ENCODE measurements at regions of chr19 and their contacts with region 1.

Region 1: GRCh38 chr19:7829561-7830271 is at the start of gene EVI5L:
- DNase-seq: peak; percentile 99
- H3K4me3 ChIP-seq: peak within 1 kb of the TSS; percentile 69 to 98
- H3K27ac ChIP-seq: no peak within 1 kb of the TSS
- H3K4me1 ChIP-seq: peaks cover 3 to 9% of the 10 kb centered on the region in 2 donors
- H3K27me3 ChIP-seq: no peaks in the 10 kb centered on the region
- CTCF ChIP-seq: no peak
- total RNA-seq, gene EVI5L: 27.7 TPM

Region 2: GRCh38 chr19:7868676-7869452 is 39.1 kb after region 1 on chr19:
- intact Hi-C with region 1: no loop called
- DNase-seq: peak in 1 of 2 donors; percentile 77
- H3K4me3 ChIP-seq: peak overlapping the region; percentile 46 to 61
- H3K27ac ChIP-seq: no peak overlapping the region
- H3K4me1 ChIP-seq: peaks cover 15 to 17% of the 10 kb centered on the region in 2 donors
- H3K27me3 ChIP-seq: peaks cover 12% of the 10 kb centered on the region
- CTCF ChIP-seq: peak in 2 of 3 experiments; percentile 55 to 89

Region 3: GRCh38 chr19:7903244-7904073 is 73.7 kb after region 1 on chr19 and contains the start of gene MAP2K7:
- intact Hi-C with region 1: loop called (anchors 1 kb)
- DNase-seq: peak; percentile 97 to 100
- H3K4me3 ChIP-seq: peak within 1 kb of the TSS; percentile 75 to 97
- H3K27ac ChIP-seq: peak within 1 kb of the TSS; percentile 77 to 81
- H3K4me1 ChIP-seq: peaks cover 5 to 22% of the 10 kb centered on the region in 2 donors
- H3K27me3 ChIP-seq: no peaks in the 10 kb centered on the region
- CTCF ChIP-seq: peak in 2 of 3 experiments; percentile 55 to 64
- total RNA-seq, gene MAP2K7: 37.3 TPM

Measured in ascending aorta (tissue), 2 donors.